Activated CD8-positive, alpha-beta T cell treated with anti-CD3 and anti-CD28 coated beads, Interleukin-2, amount 10 ng/mL, durations not matched to agents 7 days and 5 days (primary cell): ENCODE measurements at regions of chr11 and their contacts with region 1.

Region 1: GRCh38 chr11:1694064-1694845 is 2.7 kb upstream of the KRTAP5-6 start:
- DNase-seq: peak; percentile 82
- ATAC-seq: peak; percentile 90
- H3K4me3 Mint-ChIP-seq: no peak overlapping the region
- H3K27ac Mint-ChIP-seq: peak overlapping the region; percentile 49
- H3K4me1 Mint-ChIP-seq: peaks cover 10% of the 10 kb centered on the region
- H3K27me3 Mint-ChIP-seq: peaks cover 27% of the 10 kb centered on the region

Region 2: GRCh38 chr11:1497600-1497999 is 196.7 kb before region 1 on chr11:
- CTCF ChIA-PET with region 1: no interaction called
- POLR2A ChIA-PET with region 1: no interaction called
- DNase-seq: no peak
- ATAC-seq: no peak
- H3K4me3 Mint-ChIP-seq: no peak overlapping the region
- H3K27ac Mint-ChIP-seq: no peak overlapping the region
- H3K4me1 Mint-ChIP-seq: peaks cover 3% of the 10 kb centered on the region
- H3K27me3 Mint-ChIP-seq: no peaks in the 10 kb centered on the region

Region 3: GRCh38 chr11:1652771-1653540 is 41.3 kb before region 1 on chr11:
- CTCF ChIA-PET with region 1: interaction called, 40 read pairs
- POLR2A ChIA-PET with region 1: interaction called, 7 read pairs
- DNase-seq: peak; percentile 81
- ATAC-seq: peak; percentile 84
- H3K4me3 Mint-ChIP-seq: no peak overlapping the region
- H3K27ac Mint-ChIP-seq: no peak overlapping the region
- H3K4me1 Mint-ChIP-seq: no peaks in the 10 kb centered on the region
- H3K27me3 Mint-ChIP-seq: peaks cover 13% of the 10 kb centered on the region

Region 4: GRCh38 chr11:1738380-1738779 is 44.1 kb after region 1 on chr11:
- CTCF ChIA-PET with region 1: interaction called, 13 read pairs
- POLR2A ChIA-PET with region 1: no interaction called
- DNase-seq: no peak
- ATAC-seq: no peak
- H3K4me3 Mint-ChIP-seq: no peak overlapping the region
- H3K27ac Mint-ChIP-seq: no peak overlapping the region
- H3K4me1 Mint-ChIP-seq: peaks cover 13% of the 10 kb centered on the region
- H3K27me3 Mint-ChIP-seq: peaks cover 45% of the 10 kb centered on the region

Region 5: GRCh38 chr11:1772270-1773130 is 78.2 kb after region 1 on chr11:
- CTCF ChIA-PET with region 1: interaction called, 20 read pairs
- POLR2A ChIA-PET with region 1: no interaction called
- DNase-seq: peak; percentile 63
- ATAC-seq: peak; percentile 84
- H3K4me3 Mint-ChIP-seq: peak overlapping the region; percentile 35
- H3K27ac Mint-ChIP-seq: peak overlapping the region; percentile 83
- H3K4me1 Mint-ChIP-seq: peaks cover 37% of the 10 kb centered on the region
- H3K27me3 Mint-ChIP-seq: peaks cover 16% of the 10 kb centered on the region

Region 6: DNA sequence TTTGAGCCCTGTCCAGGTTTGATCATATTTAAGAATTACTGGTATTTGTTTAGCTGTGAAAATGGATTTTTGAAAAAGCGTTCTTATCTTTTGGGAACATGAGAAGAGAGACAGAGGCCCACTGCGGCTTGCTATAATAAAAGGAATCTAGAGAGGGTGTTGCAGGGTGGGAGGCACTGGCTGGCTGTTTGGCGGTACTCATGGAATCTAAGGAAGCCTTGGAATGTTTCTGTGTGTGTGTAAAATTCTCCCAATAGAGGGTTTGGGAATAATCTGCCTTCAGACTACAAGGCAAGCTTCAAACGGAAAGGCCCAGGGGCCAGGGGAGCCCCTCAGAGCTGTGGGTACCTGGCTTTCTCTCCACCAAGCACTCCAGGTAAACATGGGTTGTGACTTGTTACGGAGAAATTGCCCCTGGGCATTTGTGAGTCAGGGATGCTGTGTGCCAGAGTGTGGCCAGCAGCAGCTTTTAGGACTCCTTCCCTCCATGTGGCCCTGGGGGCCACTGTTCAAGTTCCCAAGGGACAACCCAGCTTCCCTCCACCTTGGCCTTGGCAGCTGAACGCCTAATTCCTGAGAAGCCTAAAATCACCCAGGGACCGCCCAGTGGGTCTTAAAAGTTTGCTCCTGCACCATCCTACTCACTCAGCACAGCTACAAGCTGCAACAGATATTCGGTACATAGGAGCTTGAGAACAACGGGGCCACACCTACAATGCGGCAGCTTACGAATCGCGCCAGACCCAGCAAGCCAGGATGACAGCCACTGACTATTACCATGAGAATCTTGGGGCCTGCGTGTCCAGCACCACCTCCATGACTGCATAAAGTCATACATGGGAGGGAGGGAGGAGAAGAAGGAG is 126.4 kb after region 1 on chr11:
- CTCF ChIA-PET with region 1: interaction called, 10 read pairs
- POLR2A ChIA-PET with region 1: no interaction called
- DNase-seq: no peak
- ATAC-seq: no peak
- H3K4me3 Mint-ChIP-seq: no peak overlapping the region
- H3K27ac Mint-ChIP-seq: no peak overlapping the region
- H3K4me1 Mint-ChIP-seq: no peaks in the 10 kb centered on the region
- H3K27me3 Mint-ChIP-seq: peaks cover 9% of the 10 kb centered on the region

Region 7: DNA sequence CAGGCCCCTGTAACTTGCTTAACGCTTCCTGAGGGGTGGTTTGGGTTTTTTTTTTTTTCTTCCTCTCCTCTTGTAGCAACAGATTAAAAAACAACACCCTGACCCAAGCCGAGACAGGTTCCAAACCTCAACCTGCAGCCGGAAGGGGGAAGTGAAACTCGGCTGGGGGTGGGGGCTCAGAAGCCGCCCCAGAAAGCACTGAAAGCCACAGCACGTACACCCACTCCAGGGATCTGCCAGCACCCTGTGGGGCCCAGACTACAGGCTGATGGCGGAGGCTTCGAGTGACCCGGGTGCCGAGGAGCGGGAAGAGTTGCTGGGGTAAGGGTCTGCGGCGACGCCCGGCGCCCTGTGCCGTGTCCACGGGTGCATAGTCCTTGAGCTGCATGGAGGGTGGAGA is 158.6 kb after region 1 on chr11 and contains the start of gene LSP1:
- CTCF ChIA-PET with region 1: interaction called, 10 read pairs
- POLR2A ChIA-PET with region 1: no interaction called
- DNase-seq: peak; percentile 93
- ATAC-seq: peak; percentile 63
- H3K4me3 Mint-ChIP-seq: peak within 1 kb of the TSS; percentile 99
- H3K27ac Mint-ChIP-seq: peak within 1 kb of the TSS; percentile 98
- H3K4me1 Mint-ChIP-seq: peaks cover 63% of the 10 kb centered on the region
- H3K27me3 Mint-ChIP-seq: peaks cover 3% of the 10 kb centered on the region
- total RNA-seq, gene LSP1: 463 to 477 TPM

Region 8: DNA sequence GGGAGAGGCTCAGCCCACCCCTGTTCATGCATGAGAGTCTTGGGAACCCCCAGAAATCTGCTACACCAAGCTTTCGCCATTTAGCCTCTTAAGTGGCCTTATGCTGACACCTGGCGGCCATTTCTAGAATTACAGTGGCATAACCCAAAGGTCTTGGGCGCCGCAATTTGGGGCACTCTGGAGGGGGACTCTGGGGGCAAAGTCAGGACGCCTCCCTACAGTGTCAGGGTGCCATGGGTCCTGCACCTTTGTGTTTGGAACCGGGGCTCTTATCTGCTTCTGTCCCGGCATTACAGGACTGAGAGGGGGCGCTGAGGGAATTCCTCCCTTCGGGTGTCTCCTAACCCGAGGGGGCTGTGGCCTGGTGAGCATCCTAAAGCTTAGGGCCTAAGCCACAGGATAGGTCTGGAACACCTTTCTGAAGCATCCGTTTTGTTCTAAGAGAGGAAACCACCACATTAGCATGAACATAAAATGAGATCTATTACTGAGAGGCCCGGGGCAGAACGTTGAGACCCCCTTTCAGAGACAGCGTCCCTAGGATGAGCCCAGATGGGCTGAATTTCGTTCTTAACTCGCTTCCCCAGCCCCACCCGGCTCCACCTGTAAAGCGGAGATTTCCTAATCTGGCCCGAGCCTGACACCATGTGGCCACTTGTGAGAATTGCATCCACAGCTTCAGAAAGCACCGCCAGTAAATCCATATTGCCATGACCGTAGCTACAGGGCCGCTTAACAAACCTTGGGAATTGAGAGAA is 457.4 kb after region 1 on chr11:
- CTCF ChIA-PET with region 1: interaction called, 25 read pairs
- POLR2A ChIA-PET with region 1: no interaction called
- DNase-seq: peak; percentile 87
- ATAC-seq: peak; percentile 70
- H3K4me3 Mint-ChIP-seq: no peak overlapping the region
- H3K27ac Mint-ChIP-seq: no peak overlapping the region
- H3K4me1 Mint-ChIP-seq: peaks cover 5% of the 10 kb centered on the region
- H3K27me3 Mint-ChIP-seq: peaks cover 27% of the 10 kb centered on the region